Naive thymus-derived CD4-positive, alpha-beta T cell (primary cell): ENCODE measurements at regions of chr18 and their contacts with region 1.

Region 1: GRCh38 chr18:5546660-5547059 is 2.9 kb upstream of the EPB41L3 start:
- DNase-seq: peak in 3 of 9 donors; percentile 7 to 26 (median 16)
- ATAC-seq: peak; percentile 56
- H3K4me3 ChIP-seq: no peak overlapping the region
- H3K4me3 Mint-ChIP-seq: no peak overlapping the region
- H3K27ac ChIP-seq: no peak overlapping the region
- H3K27ac Mint-ChIP-seq: no peak overlapping the region
- H3K4me1 ChIP-seq: no peaks in the 10 kb centered on the region
- H3K4me1 Mint-ChIP-seq: peaks cover 3 to 15% (median 8%) of the 10 kb centered on the region in 7 donors
- H3K27me3 ChIP-seq: no peaks in the 10 kb centered on the region
- H3K27me3 Mint-ChIP-seq: peaks cover 34 to 50% (median 43%) of the 10 kb centered on the region in 5 donors

Region 2: GRCh38 chr18:5424903-5425664 is 121.6 kb before region 1 on chr18:
- CTCF ChIA-PET with region 1: no interaction called
- POLR2A ChIA-PET with region 1: no interaction called
- intact Hi-C with region 1: loop called in 1 of 2 experiments (anchors 1 kb)
- DNase-seq: peak in 6 of 9 donors; percentile 18 to 45 (median 34)
- ATAC-seq: peak; percentile 76
- H3K4me3 ChIP-seq: no peak overlapping the region
- H3K4me3 Mint-ChIP-seq: no peak overlapping the region
- H3K27ac ChIP-seq: no peak overlapping the region
- H3K27ac Mint-ChIP-seq: no peak overlapping the region
- H3K4me1 ChIP-seq: no peaks in the 10 kb centered on the region
- H3K4me1 Mint-ChIP-seq: peaks cover 0 to 11% (median 3%) of the 10 kb centered on the region in 7 donors
- H3K27me3 ChIP-seq: no peaks in the 10 kb centered on the region
- H3K27me3 Mint-ChIP-seq: peaks cover 0 to 12% (median 4%) of the 10 kb centered on the region in 5 donors

Region 3: DNA sequence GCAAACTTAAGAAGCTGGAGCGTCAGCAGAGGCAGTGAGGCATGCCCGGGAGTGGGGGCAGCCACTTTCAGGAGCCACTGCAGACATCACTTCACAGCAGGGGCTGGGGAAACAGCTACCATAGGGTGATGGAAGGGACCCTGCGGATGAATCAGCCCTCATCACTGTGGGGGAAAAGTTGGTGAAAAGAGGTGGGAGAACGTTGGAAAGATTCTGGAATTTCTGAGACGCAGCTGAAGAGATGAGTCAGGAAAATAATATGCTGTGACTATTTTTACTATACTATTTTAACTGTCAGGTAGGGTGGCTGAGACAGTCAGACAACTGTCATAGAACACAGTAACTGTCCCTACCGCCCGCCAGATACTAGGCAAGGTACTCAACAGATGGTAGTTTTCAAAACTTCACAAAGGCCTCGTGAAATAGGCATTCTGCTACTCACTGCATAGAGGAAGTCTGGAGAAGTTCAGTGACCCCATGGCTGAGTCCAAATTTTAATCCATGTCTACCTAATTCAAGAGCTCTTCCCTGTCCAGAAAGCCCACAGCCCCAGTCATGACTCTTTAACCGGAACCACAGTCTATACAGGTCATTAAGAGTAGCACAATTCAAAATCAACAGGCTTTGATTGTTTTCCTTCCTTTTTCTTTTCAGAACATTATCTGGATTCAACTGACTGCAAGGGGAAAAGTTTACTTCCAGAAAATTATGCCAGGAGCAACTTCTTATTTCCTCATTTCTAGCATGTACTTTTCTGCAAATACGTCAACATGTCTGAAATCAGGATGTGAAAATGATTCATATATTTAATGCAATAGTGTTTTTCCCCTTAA is 36.4 kb after region 1 on chr18:
- CTCF ChIA-PET with region 1: no interaction called
- POLR2A ChIA-PET with region 1: no interaction called
- intact Hi-C with region 1: no loop called
- DNase-seq: no peak
- ATAC-seq: peak; percentile 59
- H3K4me3 ChIP-seq: no peak overlapping the region
- H3K4me3 Mint-ChIP-seq: no peak overlapping the region
- H3K27ac ChIP-seq: no peak overlapping the region
- H3K27ac Mint-ChIP-seq: no peak overlapping the region
- H3K4me1 ChIP-seq: no peaks in the 10 kb centered on the region
- H3K4me1 Mint-ChIP-seq: no peaks in the 10 kb centered on the region
- H3K27me3 ChIP-seq: no peaks in the 10 kb centered on the region
- H3K27me3 Mint-ChIP-seq: peaks cover 0 to 19% (median 11%) of the 10 kb centered on the region in 5 donors

Region 4: DNA sequence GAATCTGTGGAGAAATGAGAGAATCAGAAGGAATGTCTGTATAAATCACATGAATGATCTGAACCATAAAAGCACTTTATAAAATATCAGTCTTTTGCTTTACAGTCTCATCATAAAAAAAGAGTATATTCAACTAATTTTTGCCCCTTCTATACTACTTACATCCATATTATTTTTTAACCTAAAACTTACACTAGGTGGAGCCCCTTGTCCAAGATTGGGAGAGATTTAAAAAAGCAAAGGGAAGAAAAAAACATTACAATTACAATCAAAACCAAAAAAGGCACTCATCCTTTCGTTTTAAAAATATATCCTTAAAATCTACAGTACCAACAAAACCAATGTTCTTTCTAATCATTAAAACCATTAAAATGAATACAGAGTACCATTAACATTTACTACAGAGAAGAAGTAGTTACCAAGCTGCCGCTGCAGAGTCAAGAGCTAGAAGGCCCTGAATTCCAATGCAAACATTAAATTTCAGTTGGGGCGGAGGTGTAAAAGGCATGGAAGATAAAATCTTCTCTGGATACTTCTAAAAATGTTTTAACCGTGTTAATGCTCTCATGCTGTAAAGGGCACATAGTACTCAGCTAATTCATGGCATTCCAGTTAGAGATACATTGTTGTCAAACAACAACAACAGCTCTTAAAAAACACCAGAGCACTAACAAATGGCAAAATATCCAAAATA is 53.9 kb after region 1 on chr18:
- CTCF ChIA-PET with region 1: no interaction called
- POLR2A ChIA-PET with region 1: no interaction called
- intact Hi-C with region 1: loop called in 1 of 2 experiments (anchors 10 kb)
- DNase-seq: peak in 1 of 9 donors; percentile 5
- ATAC-seq: no peak
- H3K4me3 ChIP-seq: no peak overlapping the region
- H3K4me3 Mint-ChIP-seq: no peak overlapping the region
- H3K27ac ChIP-seq: no peak overlapping the region
- H3K27ac Mint-ChIP-seq: no peak overlapping the region
- H3K4me1 ChIP-seq: no peaks in the 10 kb centered on the region
- H3K4me1 Mint-ChIP-seq: no peaks in the 10 kb centered on the region
- H3K27me3 ChIP-seq: no peaks in the 10 kb centered on the region
- H3K27me3 Mint-ChIP-seq: peaks cover 7 to 43% (median 23%) of the 10 kb centered on the region in 5 donors